PC-9 (cell line): ENCODE measurements at regions of chr19 and their contacts with region 1.

Region 1: GRCh38 chr19:17135001-17135853 is 59.6 kb downstream of the MYO9B start:
- DNase-seq: peak; percentile 95 to 98
- H3K4me3 ChIP-seq: peak overlapping the region; percentile 54
- H3K27ac ChIP-seq: peak overlapping the region; percentile 93
- H3K4me1 ChIP-seq: peaks cover 46% of the 10 kb centered on the region
- H3K27me3 ChIP-seq: no peaks in the 10 kb centered on the region
- CTCF ChIP-seq: no peak

Region 2: GRCh38 chr19:17097593-17098126 is 37.6 kb before region 1 on chr19:
- CTCF ChIA-PET with region 1: interaction called, 3 read pairs
- POLR2A ChIA-PET with region 1: no interaction called
- intact Hi-C with region 1: loop called (anchors 5 kb)
- DNase-seq: peak; percentile 47 to 79
- H3K4me3 ChIP-seq: peak overlapping the region; percentile 3; the same call in 1 of the 2 replicates
- H3K27ac ChIP-seq: peak overlapping the region; percentile 73
- H3K4me1 ChIP-seq: peaks cover 20% of the 10 kb centered on the region
- H3K27me3 ChIP-seq: no peaks in the 10 kb centered on the region
- CTCF ChIP-seq: no peak